Mammary epithelial cell (primary cell): ENCODE measurements at regions of chr1 and their contacts with region 1.

Region 1: GRCh38 chr1:176897350-176898236 is 266.9 kb downstream of the ASTN1 start:
- DNase-seq: peak; percentile 37
- H3K4me3 ChIP-seq: peak overlapping the region; percentile 11 to 26 (median 21)
- H3K27ac ChIP-seq: no peak overlapping the region
- H3K4me1 ChIP-seq: peaks cover 6% of the 10 kb centered on the region
- H3K27me3 ChIP-seq: no peaks in the 10 kb centered on the region
- CTCF ChIP-seq: peak; percentile 76 to 90

Region 2: DNA sequence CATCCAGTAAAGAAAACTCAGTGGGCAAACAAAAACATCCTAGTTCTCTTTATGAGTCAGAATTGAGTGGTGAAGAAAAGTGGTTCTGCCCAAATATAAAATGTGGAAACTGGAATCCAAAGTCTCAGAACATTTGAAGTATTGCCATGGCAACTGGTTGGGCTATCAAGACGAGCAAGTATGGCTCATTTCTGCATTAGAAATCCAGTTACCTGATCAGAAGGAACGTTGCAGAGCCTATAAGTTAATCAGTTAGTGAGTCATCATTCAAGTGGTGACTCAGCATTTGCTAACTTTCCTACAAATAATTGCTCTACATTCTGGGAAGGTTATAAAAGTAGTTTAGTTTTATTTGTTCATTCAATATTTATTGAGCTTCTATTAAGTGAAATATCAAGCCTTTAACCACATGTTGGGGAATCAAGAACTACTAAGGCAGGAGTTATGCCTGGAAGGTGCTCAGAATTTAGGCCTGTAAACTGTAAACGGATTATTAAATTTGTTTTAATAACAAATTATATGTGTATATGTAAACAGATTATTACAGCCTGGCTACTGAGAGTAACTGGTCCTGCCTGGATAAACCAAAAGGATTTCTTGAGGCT is 330.3 kb before region 1 on chr1:
- CTCF ChIA-PET with region 1: no interaction called
- dilution Hi-C with region 1: no loop called
- in situ Hi-C with region 1: no loop called
- intact Hi-C with region 1: no loop called
- DNase-seq: peak; percentile 49
- H3K4me3 ChIP-seq: no peak overlapping the region
- H3K27ac ChIP-seq: no peak overlapping the region
- H3K4me1 ChIP-seq: peaks cover 15% of the 10 kb centered on the region
- H3K27me3 ChIP-seq: no peaks in the 10 kb centered on the region
- CTCF ChIP-seq: no peak

Region 3: GRCh38 chr1:176919386-176920378 is 22.1 kb after region 1 on chr1:
- CTCF ChIA-PET with region 1: no interaction called
- dilution Hi-C with region 1: no loop called
- in situ Hi-C with region 1: no loop called
- intact Hi-C with region 1: no loop called
- DNase-seq: peak; percentile 57
- H3K4me3 ChIP-seq: no peak overlapping the region
- H3K27ac ChIP-seq: no peak overlapping the region
- H3K4me1 ChIP-seq: peaks cover 16% of the 10 kb centered on the region
- H3K27me3 ChIP-seq: no peaks in the 10 kb centered on the region
- CTCF ChIP-seq: no peak

Region 4: DNA sequence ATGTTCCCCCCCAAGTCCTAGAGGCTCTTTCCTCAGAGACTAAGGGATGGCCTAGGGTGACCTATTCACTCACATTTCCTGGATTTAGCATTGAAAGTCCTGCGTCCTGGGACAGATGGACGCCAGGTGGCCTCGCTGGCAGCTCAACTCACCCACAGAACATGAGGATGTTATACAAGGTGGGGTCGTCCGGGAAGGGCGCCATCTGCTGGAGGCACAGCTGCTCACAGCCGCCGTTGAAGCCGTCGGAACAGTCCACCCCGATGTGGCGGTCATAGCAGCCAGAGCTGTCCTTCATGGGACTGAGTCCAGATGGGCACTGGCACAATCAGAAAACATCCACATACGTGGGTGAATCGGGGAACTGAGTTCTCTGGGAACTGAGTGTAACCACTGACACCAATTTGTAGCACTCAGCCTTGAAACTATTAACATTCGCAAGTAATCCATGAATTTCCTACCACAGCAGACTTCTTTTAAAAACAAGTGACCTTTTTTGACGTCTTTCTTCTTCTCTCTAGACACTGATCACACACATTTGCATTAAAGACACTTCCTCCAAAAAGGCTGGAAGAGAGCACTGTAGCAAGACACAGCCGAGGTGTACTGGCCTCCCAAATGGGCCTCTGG is 51.6 kb after region 1 on chr1:
- CTCF ChIA-PET with region 1: no interaction called
- dilution Hi-C with region 1: no loop called
- in situ Hi-C with region 1: no loop called
- intact Hi-C with region 1: loop called (anchors 1 kb)
- DNase-seq: peak; percentile 68
- H3K4me3 ChIP-seq: no peak overlapping the region
- H3K27ac ChIP-seq: no peak overlapping the region
- H3K4me1 ChIP-seq: no peaks in the 10 kb centered on the region
- H3K27me3 ChIP-seq: no peaks in the 10 kb centered on the region
- CTCF ChIP-seq: peak; percentile 81 to 91

Region 5: GRCh38 chr1:176954242-176954641 is 56.6 kb after region 1 on chr1:
- CTCF ChIA-PET with region 1: no interaction called
- dilution Hi-C with region 1: no loop called
- in situ Hi-C with region 1: no loop called
- intact Hi-C with region 1: loop called (anchors 1 kb)
- DNase-seq: no peak
- H3K4me3 ChIP-seq: no peak overlapping the region
- H3K27ac ChIP-seq: no peak overlapping the region
- H3K4me1 ChIP-seq: no peaks in the 10 kb centered on the region
- H3K27me3 ChIP-seq: no peaks in the 10 kb centered on the region
- CTCF ChIP-seq: peak; percentile 25 to 38

Region 6: GRCh38 chr1:177181631-177182291 is 284.2 kb after region 1 on chr1:
- CTCF ChIA-PET with region 1: no interaction called
- dilution Hi-C with region 1: no loop called
- in situ Hi-C with region 1: loop called (anchors 10 kb)
- intact Hi-C with region 1: loop called (anchors 1 kb)
- DNase-seq: peak; percentile 34
- H3K4me3 ChIP-seq: peak overlapping the region in 2 of 3 experiments; percentile 23 to 31
- H3K27ac ChIP-seq: no peak overlapping the region
- H3K4me1 ChIP-seq: peaks cover 5% of the 10 kb centered on the region
- H3K27me3 ChIP-seq: peaks cover 11% of the 10 kb centered on the region
- CTCF ChIP-seq: peak; percentile 64 to 89

Region 7: GRCh38 chr1:177256153-177257075 is 358.8 kb after region 1 on chr1:
- CTCF ChIA-PET with region 1: no interaction called
- dilution Hi-C with region 1: no loop called
- in situ Hi-C with region 1: no loop called
- intact Hi-C with region 1: loop called (anchors 5 kb)
- DNase-seq: peak; percentile 93
- H3K4me3 ChIP-seq: no peak overlapping the region
- H3K27ac ChIP-seq: peak overlapping the region; percentile 73
- H3K4me1 ChIP-seq: peaks cover 26% of the 10 kb centered on the region
- H3K27me3 ChIP-seq: no peaks in the 10 kb centered on the region
- CTCF ChIP-seq: peak; percentile 62 to 66

Region 8: GRCh38 chr1:177355595-177355994 is 458.0 kb after region 1 on chr1:
- CTCF ChIA-PET with region 1: interaction called, 3 read pairs
- dilution Hi-C with region 1: no loop called
- in situ Hi-C with region 1: no loop called
- intact Hi-C with region 1: loop called (anchors 1 kb)
- DNase-seq: peak; percentile 41
- H3K4me3 ChIP-seq: no peak overlapping the region
- H3K27ac ChIP-seq: no peak overlapping the region
- H3K4me1 ChIP-seq: no peaks in the 10 kb centered on the region
- H3K27me3 ChIP-seq: no peaks in the 10 kb centered on the region
- CTCF ChIP-seq: peak; percentile 51 to 59

Region 9: DNA sequence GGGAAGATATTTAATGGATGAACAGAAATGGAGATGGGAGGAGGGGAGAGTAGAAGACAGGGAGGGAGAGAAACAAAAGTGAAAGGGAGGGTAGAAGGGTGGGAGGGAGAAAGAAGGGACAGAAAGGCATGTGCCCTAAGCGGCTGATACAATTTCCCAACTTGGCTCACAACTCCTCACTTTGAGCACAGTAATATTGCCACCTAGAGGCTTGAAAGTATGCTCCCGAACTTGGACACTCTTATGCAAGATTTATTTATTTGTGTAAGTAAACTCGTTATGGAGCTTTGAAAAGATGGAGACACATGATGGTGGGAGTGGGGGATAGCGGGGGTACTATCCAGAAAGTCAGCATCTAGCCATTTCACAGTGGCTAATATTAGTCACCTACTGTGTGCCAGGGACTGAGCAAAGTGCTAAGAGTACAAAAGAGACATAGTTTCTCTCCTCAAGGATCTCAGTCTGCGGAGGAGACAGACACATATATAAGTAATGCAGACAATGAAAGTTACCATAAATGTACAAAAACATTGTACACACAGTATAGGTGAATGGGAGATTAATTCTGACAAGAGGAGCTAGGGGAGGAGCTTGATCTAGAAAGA is 882.6 kb after region 1 on chr1:
- CTCF ChIA-PET with region 1: no interaction called
- dilution Hi-C with region 1: no loop called
- in situ Hi-C with region 1: no loop called
- intact Hi-C with region 1: loop called (anchors 1 kb)
- DNase-seq: peak; percentile 51
- H3K4me3 ChIP-seq: no peak overlapping the region
- H3K27ac ChIP-seq: no peak overlapping the region
- H3K4me1 ChIP-seq: no peaks in the 10 kb centered on the region
- H3K27me3 ChIP-seq: no peaks in the 10 kb centered on the region
- CTCF ChIP-seq: peak; percentile 49 to 71